MCF 10A (cell line): ENCODE measurements at regions of chr10 and their contacts with region 1.

Region 1: GRCh38 chr10:102009801-102010425 is 46.1 kb downstream of the ARMH3 start:
- DNase-seq: peak; percentile 87
- H3K4me3 Mint-ChIP-seq: no peak overlapping the region
- H3K27ac Mint-ChIP-seq: no peak overlapping the region
- H3K4me1 Mint-ChIP-seq: peaks cover 6% of the 10 kb centered on the region
- H3K27me3 Mint-ChIP-seq: no peaks in the 10 kb centered on the region
- CTCF ChIP-seq: peak; percentile 91

Region 2: DNA sequence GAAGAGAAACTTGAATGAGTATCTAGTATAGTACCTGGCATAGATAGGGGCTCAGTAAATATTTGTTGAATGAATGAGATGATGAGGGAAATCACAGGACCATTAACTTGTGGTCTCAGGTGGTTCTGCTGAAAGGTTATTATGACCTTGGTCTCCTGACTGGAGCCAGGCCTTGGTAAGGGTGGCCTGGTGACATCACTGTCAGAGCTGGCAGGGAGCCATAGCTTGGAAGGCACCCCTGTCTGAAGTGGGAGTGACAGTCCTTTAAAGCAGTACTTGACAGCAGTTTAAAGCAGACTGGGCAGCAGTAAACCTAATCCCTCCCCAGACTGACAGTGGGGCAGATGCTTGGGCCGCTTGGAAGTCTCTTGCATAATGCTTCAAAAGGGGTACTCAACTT is 408.4 kb before region 1 on chr10:
- CTCF ChIA-PET with region 1: no interaction called
- POLR2A ChIA-PET with region 1: no interaction called
- intact Hi-C with region 1: no loop called
- DNase-seq: no peak
- H3K4me3 Mint-ChIP-seq: no peak overlapping the region
- H3K27ac Mint-ChIP-seq: no peak overlapping the region
- H3K4me1 Mint-ChIP-seq: no peaks in the 10 kb centered on the region
- H3K27me3 Mint-ChIP-seq: no peaks in the 10 kb centered on the region
- CTCF ChIP-seq: no peak

Region 3: DNA sequence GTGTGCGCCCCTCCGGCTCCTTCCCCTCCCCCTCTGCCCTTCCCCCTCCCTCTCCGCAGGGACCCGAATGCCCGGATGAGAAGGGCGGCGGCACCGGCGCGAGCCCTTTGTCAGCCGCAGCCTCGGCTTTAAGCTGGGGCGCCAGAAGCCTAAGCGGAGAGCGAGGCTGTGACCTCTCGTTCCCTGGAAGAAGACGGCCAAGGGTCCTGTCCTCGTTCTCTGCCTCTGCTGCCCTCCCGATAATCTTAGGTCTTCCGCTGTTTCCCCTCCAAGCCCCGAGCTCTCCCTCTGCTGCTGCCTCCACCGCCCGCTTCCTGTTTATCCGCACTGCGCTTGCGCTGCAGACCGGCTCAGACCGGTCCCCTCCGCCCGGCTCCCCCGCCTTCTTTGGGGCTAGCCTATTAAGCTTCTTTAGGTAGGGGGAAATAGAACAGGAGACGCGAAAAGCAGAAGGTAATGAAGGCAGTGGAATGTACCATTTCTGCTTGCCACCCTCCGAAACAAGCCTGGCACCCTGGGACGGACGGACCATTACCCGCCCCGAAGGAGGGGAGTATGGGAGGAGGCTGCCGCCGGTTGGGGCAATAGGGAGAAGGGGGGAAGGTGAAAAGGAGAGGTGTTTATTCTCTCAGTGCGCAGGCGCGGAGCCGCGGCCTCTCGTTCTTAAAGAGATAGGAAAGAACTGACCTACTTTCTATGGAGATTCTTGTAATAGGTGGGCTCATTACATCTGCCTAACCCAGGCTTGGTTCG is 191.6 kb before region 1 on chr10 and contains the start of gene OGA:
- CTCF ChIA-PET with region 1: interaction called, 7 read pairs
- POLR2A ChIA-PET with region 1: interaction called, 10 read pairs
- intact Hi-C with region 1: no loop called
- DNase-seq: peak; percentile 99
- H3K4me3 Mint-ChIP-seq: peak within 1 kb of the TSS; percentile 84
- H3K27ac Mint-ChIP-seq: peak within 1 kb of the TSS; percentile 89
- H3K4me1 Mint-ChIP-seq: peaks cover 16% of the 10 kb centered on the region
- H3K27me3 Mint-ChIP-seq: no peaks in the 10 kb centered on the region
- CTCF ChIP-seq: no peak
- total RNA-seq, gene OGA: 96.1 and 115 TPM in 2 replicates

Region 4: DNA sequence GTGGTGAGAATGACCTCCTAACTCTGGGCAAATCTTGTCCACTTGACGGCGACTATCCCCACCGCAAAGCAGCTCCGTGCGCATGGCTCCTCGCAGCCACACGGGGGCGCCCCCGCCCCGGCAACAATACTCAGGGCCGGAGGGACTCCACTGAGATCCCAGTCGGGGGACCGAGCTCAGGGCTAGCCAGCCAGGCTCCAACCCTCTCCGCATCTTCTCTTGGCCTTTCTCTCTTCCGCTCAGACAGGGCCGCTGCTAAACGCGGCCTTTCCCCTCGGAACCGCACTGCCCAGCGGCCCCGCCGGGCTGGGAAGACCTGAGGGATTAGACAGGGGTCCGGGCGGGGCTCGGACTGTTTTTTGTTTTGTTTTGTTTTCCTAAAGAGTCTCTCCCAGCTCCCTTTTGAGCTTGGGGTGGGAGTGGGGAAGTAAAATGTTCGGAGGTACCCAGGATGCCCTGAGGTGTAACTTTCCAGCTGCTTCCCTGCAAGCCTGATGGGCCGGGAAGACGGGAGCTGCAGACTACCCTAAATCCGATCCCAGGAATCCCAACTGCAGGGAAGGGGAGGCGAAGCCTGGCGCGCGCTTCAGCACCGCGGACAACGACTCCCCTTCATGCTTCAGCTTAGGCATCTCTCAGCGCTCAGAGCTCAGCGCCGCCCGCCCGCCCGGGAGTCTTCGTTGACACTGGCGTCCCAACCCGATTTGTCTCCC is 169.0 kb before region 1 on chr10:
- CTCF ChIA-PET with region 1: interaction called, 69 read pairs
- POLR2A ChIA-PET with region 1: no interaction called
- intact Hi-C with region 1: loop called (anchors 1 kb)
- DNase-seq: peak; percentile 79
- H3K4me3 Mint-ChIP-seq: peak overlapping the region; percentile 57
- H3K27ac Mint-ChIP-seq: no peak overlapping the region
- H3K4me1 Mint-ChIP-seq: peaks cover 15% of the 10 kb centered on the region
- H3K27me3 Mint-ChIP-seq: no peaks in the 10 kb centered on the region
- CTCF ChIP-seq: peak; percentile 85

Region 5: DNA sequence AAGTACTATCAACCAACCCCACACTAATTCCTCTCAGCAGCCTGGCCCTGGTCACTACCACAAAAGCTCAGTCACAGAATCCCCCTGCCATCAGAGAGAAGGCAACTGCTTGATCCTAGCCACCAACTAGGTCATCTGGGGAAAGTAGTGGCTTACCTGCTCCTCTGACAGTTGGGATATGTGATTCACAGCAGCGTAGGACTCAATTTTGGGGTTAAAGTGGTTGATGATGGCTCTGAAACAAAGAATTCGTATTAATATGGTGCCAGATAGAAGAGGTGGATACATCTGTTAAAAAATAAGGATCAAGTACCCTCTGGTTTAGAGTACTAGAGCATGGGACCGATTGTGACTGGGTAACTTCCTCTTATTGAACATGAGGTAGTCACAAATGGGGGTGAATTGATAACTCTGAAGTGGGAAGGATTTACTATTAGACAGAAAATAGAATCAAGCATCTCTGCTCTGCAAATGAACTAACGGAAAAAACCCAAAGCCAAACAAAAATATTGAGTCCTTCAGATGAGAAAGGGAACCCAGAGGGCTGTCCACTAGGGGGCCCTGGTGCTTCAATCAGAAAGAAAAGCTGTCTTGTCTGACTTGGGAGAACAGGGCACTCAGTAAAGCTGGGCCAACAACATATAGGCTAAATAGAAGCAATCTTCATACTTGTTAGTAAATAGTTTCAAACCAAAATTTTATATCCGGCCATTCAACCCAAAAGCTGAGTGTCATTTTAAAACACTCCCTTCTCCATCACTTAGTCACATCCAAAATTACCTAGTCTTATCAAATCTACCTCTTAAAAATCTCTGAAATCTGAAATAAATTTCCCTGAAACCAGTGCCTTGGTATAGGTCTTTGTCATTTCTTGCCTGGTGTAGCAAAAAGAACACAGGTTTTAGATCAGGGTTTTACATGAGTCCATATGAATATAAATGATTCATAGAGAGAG is 120.4 kb before region 1 on chr10:
- CTCF ChIA-PET with region 1: interaction called, 45 read pairs
- POLR2A ChIA-PET with region 1: interaction called, 3 read pairs
- intact Hi-C with region 1: loop called (anchors 1 kb)
- DNase-seq: peak; percentile 81
- H3K4me3 Mint-ChIP-seq: no peak overlapping the region
- H3K27ac Mint-ChIP-seq: peak overlapping the region; percentile 69
- H3K4me1 Mint-ChIP-seq: peaks cover 5% of the 10 kb centered on the region
- H3K27me3 Mint-ChIP-seq: no peaks in the 10 kb centered on the region
- CTCF ChIP-seq: peak; percentile 78

Region 6: GRCh38 chr10:101952191-101952590 is 57.7 kb before region 1 on chr10:
- CTCF ChIA-PET with region 1: interaction called, 10 read pairs
- POLR2A ChIA-PET with region 1: no interaction called
- intact Hi-C with region 1: no loop called
- DNase-seq: no peak
- H3K4me3 Mint-ChIP-seq: no peak overlapping the region
- H3K27ac Mint-ChIP-seq: no peak overlapping the region
- H3K4me1 Mint-ChIP-seq: no peaks in the 10 kb centered on the region
- H3K27me3 Mint-ChIP-seq: no peaks in the 10 kb centered on the region
- CTCF ChIP-seq: no peak

Region 7: DNA sequence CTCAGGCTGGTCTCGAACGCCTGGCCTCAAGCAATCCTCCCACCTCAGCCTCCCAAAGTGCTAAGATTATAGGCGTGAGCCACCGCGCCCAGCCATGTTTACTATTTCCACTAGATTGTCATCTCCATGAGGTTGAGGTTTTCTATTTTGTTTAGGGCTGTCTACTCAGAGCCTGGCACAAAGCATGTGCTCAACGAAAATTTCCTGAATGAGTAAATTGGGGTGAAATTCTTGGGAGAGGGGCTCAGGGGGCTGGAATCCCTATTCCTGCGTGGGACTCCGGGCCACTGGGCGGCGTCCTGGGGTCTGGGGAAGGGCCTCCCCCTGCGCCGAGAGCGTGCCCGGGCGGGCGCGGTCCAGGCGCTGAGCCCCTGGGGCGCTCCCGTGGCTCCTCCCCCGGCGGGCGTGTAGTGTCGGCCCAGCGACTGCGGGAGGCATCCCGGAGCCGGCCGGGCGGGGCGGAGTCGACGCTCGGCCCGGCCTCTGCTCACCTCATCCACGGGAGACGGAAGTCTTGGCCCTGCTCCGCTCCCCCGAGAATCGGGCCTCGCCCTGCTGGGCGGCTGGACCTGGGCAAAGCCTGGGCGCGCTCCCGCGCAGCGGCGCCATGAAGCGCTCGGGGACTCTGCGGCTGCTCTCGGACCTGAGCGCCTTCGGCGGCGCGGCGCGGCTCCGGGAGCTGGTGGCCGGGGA is 55.1 kb after region 1 on chr10 and contains the start of gene HPS6:
- CTCF ChIA-PET with region 1: interaction called, 12 read pairs
- POLR2A ChIA-PET with region 1: interaction called, 3 read pairs
- intact Hi-C with region 1: no loop called
- DNase-seq: peak; percentile 93
- H3K4me3 Mint-ChIP-seq: peak within 1 kb of the TSS; percentile 83
- H3K27ac Mint-ChIP-seq: peak within 1 kb of the TSS; percentile 83
- H3K4me1 Mint-ChIP-seq: peaks cover 16% of the 10 kb centered on the region
- H3K27me3 Mint-ChIP-seq: no peaks in the 10 kb centered on the region
- CTCF ChIP-seq: no peak
- total RNA-seq, gene HPS6: 15.0 and 16.6 TPM in 2 replicates